ENCODE measurements at regions of chr5 and their contacts with region 1.

Region 1: DNA sequence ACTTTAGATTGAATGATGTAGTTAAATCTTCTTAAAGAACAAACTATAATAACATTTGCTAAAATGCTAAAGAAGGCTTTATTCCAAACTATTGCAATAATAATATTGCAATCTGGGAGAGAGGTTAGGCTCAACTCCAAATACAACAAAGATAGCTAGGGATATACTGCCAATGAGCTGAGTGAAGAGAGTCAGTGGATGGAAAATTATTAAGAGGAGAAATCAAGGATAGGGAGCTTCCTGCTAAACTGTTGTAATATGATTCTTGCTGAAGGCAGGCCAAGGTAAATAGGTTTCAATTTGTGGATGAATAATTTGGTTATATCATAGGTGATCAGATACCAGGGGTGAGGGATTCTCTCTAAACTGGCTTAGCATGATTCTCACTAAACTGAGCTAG is 1651.5 kb downstream of the EFNA5 start:
- DNase-seq: no peak
- H3K4me3 ChIP-seq: no peak overlapping the region
- H3K27ac ChIP-seq: peak overlapping the region; percentile 62
- H3K4me1 ChIP-seq: peaks cover 18% of the 10 kb centered on the region
- H3K27me3 ChIP-seq: no peaks in the 10 kb centered on the region
- CTCF ChIP-seq: no peak

Region 2: GRCh38 chr5:104347119-104347708 is 1672.0 kb before region 1 on chr5:
- CTCF ChIA-PET with region 1: no interaction called
- POLR2A ChIA-PET with region 1: no interaction called
- intact Hi-C with region 1: loop called (anchors 2 kb)
- DNase-seq: peak; percentile 74
- H3K4me3 ChIP-seq: no peak overlapping the region
- H3K27ac ChIP-seq: no peak overlapping the region
- H3K4me1 ChIP-seq: peaks cover 25% of the 10 kb centered on the region
- H3K27me3 ChIP-seq: no peaks in the 10 kb centered on the region
- CTCF ChIP-seq: peak; percentile 57

Region 3: GRCh38 chr5:104643320-104643719 is 1375.9 kb before region 1 on chr5:
- CTCF ChIA-PET with region 1: no interaction called
- POLR2A ChIA-PET with region 1: interaction called, 4 read pairs
- intact Hi-C with region 1: loop called (anchors 1 kb)
- DNase-seq: peak; percentile 91
- H3K4me3 ChIP-seq: peak overlapping the region; percentile 11
- H3K27ac ChIP-seq: peak overlapping the region; percentile 95
- H3K4me1 ChIP-seq: peaks cover 63% of the 10 kb centered on the region
- H3K27me3 ChIP-seq: no peaks in the 10 kb centered on the region
- CTCF ChIP-seq: no peak

Region 4: DNA sequence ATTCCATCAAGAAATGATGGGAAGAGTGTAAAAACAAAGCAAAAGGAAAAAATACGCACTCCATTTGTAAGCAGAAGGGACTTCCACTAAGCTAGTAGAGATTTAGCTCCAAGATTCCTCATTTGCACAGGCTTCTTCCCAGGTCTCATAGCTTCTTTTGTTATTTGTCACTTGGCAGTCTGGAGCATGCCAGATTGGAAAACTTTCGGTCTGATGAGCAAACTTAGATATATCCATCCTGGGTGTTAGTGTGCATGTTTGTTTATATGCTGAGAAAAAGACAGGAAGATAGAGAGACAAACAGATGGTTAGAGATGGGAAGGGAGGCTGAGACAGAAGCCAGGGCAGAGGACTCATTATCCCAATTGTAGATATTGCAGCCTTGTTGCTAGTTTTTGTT is 812.2 kb before region 1 on chr5:
- CTCF ChIA-PET with region 1: no interaction called
- POLR2A ChIA-PET with region 1: no interaction called
- intact Hi-C with region 1: loop called (anchors 5 kb)
- DNase-seq: no peak
- H3K4me3 ChIP-seq: no peak overlapping the region
- H3K27ac ChIP-seq: no peak overlapping the region
- H3K4me1 ChIP-seq: peaks cover 16% of the 10 kb centered on the region
- H3K27me3 ChIP-seq: no peaks in the 10 kb centered on the region
- CTCF ChIP-seq: no peak

Region 5: DNA sequence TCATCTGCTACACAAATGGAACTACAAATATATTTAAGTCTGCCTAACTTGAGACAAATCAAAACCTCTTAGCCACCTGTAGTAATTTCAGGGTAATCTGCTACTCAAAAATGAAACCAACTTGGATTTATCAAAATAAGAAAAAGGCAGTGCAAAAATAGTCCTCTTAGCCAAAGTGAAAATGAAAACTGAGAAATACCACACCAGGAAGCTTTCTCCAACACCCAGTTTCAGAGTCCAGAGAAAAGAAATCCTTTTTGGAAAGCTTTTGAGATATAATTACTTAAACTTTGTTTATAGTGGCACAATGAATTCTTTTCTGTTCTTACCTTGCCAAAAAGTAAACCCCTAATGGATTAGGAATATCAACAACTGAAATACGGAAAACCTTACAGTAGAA is 661.1 kb after region 1 on chr5:
- CTCF ChIA-PET with region 1: no interaction called
- POLR2A ChIA-PET with region 1: no interaction called
- intact Hi-C with region 1: no loop called
- DNase-seq: no peak
- H3K4me3 ChIP-seq: no peak overlapping the region
- H3K27ac ChIP-seq: no peak overlapping the region
- H3K4me1 ChIP-seq: no peaks in the 10 kb centered on the region
- H3K27me3 ChIP-seq: no peaks in the 10 kb centered on the region
- CTCF ChIP-seq: no peak

Region 6: GRCh38 chr5:106749826-106750225 is 730.6 kb after region 1 on chr5:
- CTCF ChIA-PET with region 1: no interaction called
- POLR2A ChIA-PET with region 1: no interaction called
- intact Hi-C with region 1: loop called (anchors 5 kb)
- DNase-seq: peak; percentile 84
- H3K4me3 ChIP-seq: no peak overlapping the region
- H3K27ac ChIP-seq: peak overlapping the region; percentile 89
- H3K4me1 ChIP-seq: peaks cover 48% of the 10 kb centered on the region
- H3K27me3 ChIP-seq: no peaks in the 10 kb centered on the region
- CTCF ChIP-seq: no peak

Measured in A673 (cell line).